MCF 10A (cell line): ENCODE measurements at regions of chr9 and their contacts with region 1.

Region 1: GRCh38 chr9:95425910-95426551 is 90.7 kb downstream of the PTCH1 start:
- DNase-seq: peak; percentile 55
- H3K4me3 Mint-ChIP-seq: peak overlapping the region; percentile 84
- H3K27ac Mint-ChIP-seq: peak overlapping the region; percentile 94
- H3K4me1 Mint-ChIP-seq: no peaks in the 10 kb centered on the region
- H3K27me3 Mint-ChIP-seq: no peaks in the 10 kb centered on the region
- CTCF ChIP-seq: no peak

Region 2: DNA sequence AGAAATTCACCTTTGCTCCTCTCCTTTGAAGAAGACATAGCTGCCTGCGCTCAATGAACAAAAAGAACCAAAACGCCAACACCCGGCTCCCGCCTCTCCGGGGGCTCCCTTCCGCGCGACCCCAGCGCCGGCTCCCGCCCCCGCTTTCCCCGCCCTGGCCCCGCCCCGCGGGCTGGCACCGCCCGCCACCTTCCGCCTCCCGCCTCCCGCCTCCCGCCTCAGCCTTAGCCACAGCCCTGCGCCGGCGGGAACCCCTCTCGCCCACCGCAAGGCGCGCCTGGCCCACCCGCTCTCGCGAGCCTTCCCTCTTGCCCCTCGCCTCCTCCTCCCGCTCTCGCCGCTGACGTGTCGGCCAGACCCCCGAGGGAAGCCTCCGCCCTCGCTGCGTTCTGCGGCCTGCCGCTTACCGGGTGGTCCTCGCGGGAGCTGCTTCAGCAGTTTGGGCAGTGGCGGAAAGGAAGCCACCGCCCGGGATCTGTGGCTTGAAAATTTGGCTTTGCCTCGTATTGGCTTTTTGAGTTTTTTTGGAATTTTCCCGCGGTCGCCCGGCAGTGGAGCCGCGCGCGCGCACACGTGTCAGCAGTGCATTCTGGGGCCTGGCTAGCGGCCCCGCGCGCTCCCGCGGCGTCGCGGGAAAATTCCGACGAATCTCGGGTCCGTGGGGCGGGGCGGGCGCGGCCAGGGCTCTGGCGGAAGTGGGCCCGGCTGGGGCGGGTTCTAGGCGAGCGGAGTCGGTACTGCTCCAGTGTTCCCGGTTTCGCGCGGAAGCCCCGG is 108.7 kb before region 1 on chr9 and contains the start of gene FANCC:
- CTCF ChIA-PET with region 1: no interaction called
- POLR2A ChIA-PET with region 1: interaction called, 13 read pairs
- intact Hi-C with region 1: no loop called
- DNase-seq: peak; percentile 80
- H3K4me3 Mint-ChIP-seq: peak within 1 kb of the TSS; percentile 86
- H3K27ac Mint-ChIP-seq: peak within 1 kb of the TSS; percentile 95
- H3K4me1 Mint-ChIP-seq: peaks cover 14% of the 10 kb centered on the region
- H3K27me3 Mint-ChIP-seq: no peaks in the 10 kb centered on the region
- CTCF ChIP-seq: no peak
- total RNA-seq, gene FANCC: 9.6 and 12.1 TPM in 2 replicates

Region 3: DNA sequence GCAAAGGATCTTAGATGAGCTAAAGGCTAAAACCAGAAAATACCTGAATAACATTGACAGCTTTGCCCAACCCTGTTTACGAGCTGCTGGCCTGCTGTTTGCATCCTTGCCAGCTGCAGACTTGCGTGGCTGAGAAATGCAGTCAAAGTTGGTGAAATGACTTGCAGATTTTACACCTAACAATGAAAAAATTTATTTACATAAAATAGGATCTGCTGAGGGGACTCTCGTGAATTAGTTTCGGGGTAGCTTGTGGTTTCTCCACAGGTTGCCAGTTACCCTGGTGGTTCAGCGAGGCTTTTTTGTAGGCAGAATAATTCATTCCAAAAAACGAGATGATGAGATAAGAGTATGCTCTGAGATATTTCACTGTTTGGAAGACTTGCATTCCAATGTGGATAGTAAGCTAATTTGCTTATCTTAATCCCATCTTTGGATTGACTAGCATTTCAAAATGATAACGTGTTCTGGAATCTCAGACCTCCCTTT is 42.8 kb before region 1 on chr9:
- CTCF ChIA-PET with region 1: interaction called, 3 read pairs
- POLR2A ChIA-PET with region 1: interaction called, 19 read pairs
- intact Hi-C with region 1: no loop called
- DNase-seq: no peak
- H3K4me3 Mint-ChIP-seq: no peak overlapping the region
- H3K27ac Mint-ChIP-seq: no peak overlapping the region
- H3K4me1 Mint-ChIP-seq: peaks cover 18% of the 10 kb centered on the region
- H3K27me3 Mint-ChIP-seq: no peaks in the 10 kb centered on the region
- CTCF ChIP-seq: no peak

Region 4: DNA sequence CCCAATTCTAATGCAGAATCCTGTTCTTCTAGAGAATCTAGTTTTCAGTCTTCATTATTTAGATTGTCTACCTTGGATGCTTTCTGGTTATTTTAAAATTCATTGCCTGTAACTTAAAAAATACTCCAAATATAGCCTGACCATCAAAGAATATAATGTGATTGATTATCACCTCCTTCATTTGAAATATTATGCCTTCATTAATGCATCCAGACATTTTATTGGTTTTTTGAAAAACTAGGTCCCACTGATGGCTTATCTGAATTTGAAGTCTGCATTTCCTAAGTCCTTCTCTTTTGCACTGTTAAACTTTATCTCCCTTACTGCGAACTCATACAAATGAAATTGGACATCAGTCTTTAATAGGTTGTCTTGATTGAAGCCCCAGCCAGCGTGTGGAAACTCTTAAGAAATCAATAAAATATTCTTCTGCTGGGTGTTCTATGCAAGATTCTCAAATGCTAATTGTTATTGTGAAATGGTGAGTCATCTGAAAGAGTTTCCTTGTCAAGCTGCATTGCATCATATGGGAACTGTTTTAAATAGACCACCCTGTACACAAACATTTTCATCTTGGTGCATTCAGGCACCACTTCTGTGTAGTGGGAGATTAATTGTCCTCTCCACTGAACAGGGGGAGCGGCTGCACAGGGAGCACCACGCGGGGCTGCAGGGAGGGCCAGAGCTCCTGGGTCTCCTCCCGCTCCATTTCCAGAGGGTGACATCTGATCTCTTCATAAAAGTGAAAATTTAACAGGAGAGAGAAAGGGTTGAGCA is 16.2 kb before region 1 on chr9:
- CTCF ChIA-PET with region 1: interaction called, 3 read pairs
- POLR2A ChIA-PET with region 1: interaction called, 9 read pairs
- intact Hi-C with region 1: loop called (anchors 2 kb)
- DNase-seq: peak; percentile 80
- H3K4me3 Mint-ChIP-seq: no peak overlapping the region
- H3K27ac Mint-ChIP-seq: no peak overlapping the region
- H3K4me1 Mint-ChIP-seq: peaks cover 22% of the 10 kb centered on the region
- H3K27me3 Mint-ChIP-seq: no peaks in the 10 kb centered on the region
- CTCF ChIP-seq: no peak